Upper lobe of right lung (tissue), 1 donor: ENCODE measurements at regions of chr18 and their contacts with region 1.

Region 1: GRCh38 chr18:63320046-63320689 is 599 bp upstream of the BCL2 start:
- DNase-seq: peak; percentile 90
- ATAC-seq: peak; percentile 84
- H3K4me3 ChIP-seq: peak overlapping the region; percentile 84
- H3K27ac ChIP-seq: peak overlapping the region; percentile 59
- H3K4me1 ChIP-seq: peaks cover 26% of the 10 kb centered on the region
- H3K27me3 ChIP-seq: no peaks in the 10 kb centered on the region
- CTCF ChIP-seq: no peak

Region 2: DNA sequence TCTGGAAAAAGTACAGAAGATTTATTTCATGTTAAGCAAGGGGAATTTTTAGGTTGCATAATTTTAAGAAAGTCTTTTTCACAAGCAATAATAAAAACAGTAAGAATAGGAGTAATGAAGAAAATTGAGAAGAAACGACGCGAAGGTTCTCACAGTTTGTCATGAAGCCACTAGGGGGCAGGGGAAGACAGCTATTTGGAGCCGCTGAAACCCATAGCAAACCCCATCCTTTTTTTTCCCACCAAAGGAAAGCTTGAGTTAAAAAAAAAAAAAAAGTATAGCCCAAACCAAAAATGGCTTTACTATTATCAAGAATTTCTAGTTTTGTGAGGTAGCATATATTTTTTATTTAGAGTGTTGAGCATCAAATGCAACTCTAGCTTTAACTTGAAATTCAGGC is 303.9 kb before region 1 on chr18:
- intact Hi-C with region 1: loop called (anchors 5 kb)
- DNase-seq: no peak
- ATAC-seq: peak; percentile 83
- H3K4me3 ChIP-seq: no peak overlapping the region
- H3K27ac ChIP-seq: no peak overlapping the region
- H3K4me1 ChIP-seq: no peaks in the 10 kb centered on the region
- H3K27me3 ChIP-seq: no peaks in the 10 kb centered on the region
- CTCF ChIP-seq: peak; percentile 86